K562 (cell line): ENCODE measurements at regions of chr1 and their contacts with region 1.

Region 1: GRCh38 chr1:244864253-244865027 is at the start of gene HNRNPU:
- DNase-seq: peak; percentile 93 to 99 (median 93)
- ATAC-seq: peak; percentile 86
- H3K4me3 ChIP-seq: peak within 1 kb of the TSS; percentile 96
- H3K27ac ChIP-seq: peak within 1 kb of the TSS; percentile 98
- H3K4me1 ChIP-seq: peaks cover 15% of the 10 kb centered on the region in 2 experiments; a peak in 4 of 5 replicates
- H3K27me3 ChIP-seq: no peaks in the 10 kb centered on the region
- CTCF ChIP-seq: peak; percentile 14 to 55 (median 43); a peak in 3 of 6 replicates
- EP300 ChIP-seq: peak; percentile 46
- POLR2A ChIP-seq: peak; percentile 98
- RAD21 ChIP-seq: peak in 1 of 2 experiments; percentile 10; a peak in 2 of 4 replicates
- polyA plus RNA-seq, gene HNRNPU: 159 to 174 TPM

Region 2: GRCh38 chr1:243255791-243256512 is 1608.5 kb before region 1 on chr1 and contains the start of gene SDCCAG8:
- CTCF ChIA-PET with region 1: no interaction called
- POLR2A ChIA-PET with region 1: no interaction called
- in situ Hi-C with region 1: no loop called
- intact Hi-C with region 1: loop called (anchors 5 kb)
- DNase-seq: peak; percentile 91 to 100 (median 94)
- ATAC-seq: peak; percentile 81
- H3K4me3 ChIP-seq: peak within 1 kb of the TSS; percentile 82
- H3K27ac ChIP-seq: peak within 1 kb of the TSS; percentile 97
- H3K4me1 ChIP-seq: peaks cover 9 to 13% of the 10 kb centered on the region in 2 experiments
- H3K27me3 ChIP-seq: no peaks in the 10 kb centered on the region
- CTCF ChIP-seq: no peak
- EP300 ChIP-seq: peak; percentile 46
- POLR2A ChIP-seq: peak; percentile 93
- RAD21 ChIP-seq: 0 out of 4 replicates have a peak, but pooled peaks of 1 of the 2 experiments have one; percentile 17
- polyA plus RNA-seq, gene SDCCAG8: 21.6 to 29.6 TPM

Region 3: GRCh38 chr1:244835276-244836134 is 28.9 kb before region 1 on chr1 and contains the start of gene COX20:
- CTCF ChIA-PET with region 1: interaction called, 4 read pairs
- POLR2A ChIA-PET with region 1: interaction called, 485 read pairs
- in situ Hi-C with region 1: no loop called
- intact Hi-C with region 1: loop called (anchors 1 kb)
- DNase-seq: peak; percentile 94 to 98 (median 95)
- ATAC-seq: peak; percentile 79
- H3K4me3 ChIP-seq: peak within 1 kb of the TSS; percentile 74
- H3K27ac ChIP-seq: peak within 1 kb of the TSS; percentile 98
- H3K4me1 ChIP-seq: peaks cover 14 to 15% of the 10 kb centered on the region in 2 experiments; a peak in 4 of 5 replicates
- H3K27me3 ChIP-seq: no peaks in the 10 kb centered on the region
- CTCF ChIP-seq: no peak
- EP300 ChIP-seq: 0 out of 2 replicates have a peak, but pooled peaks have one; percentile 40
- POLR2A ChIP-seq: peak; percentile 97
- RAD21 ChIP-seq: no peak
- polyA plus RNA-seq, gene COX20: 145 to 171 TPM

Region 4: DNA sequence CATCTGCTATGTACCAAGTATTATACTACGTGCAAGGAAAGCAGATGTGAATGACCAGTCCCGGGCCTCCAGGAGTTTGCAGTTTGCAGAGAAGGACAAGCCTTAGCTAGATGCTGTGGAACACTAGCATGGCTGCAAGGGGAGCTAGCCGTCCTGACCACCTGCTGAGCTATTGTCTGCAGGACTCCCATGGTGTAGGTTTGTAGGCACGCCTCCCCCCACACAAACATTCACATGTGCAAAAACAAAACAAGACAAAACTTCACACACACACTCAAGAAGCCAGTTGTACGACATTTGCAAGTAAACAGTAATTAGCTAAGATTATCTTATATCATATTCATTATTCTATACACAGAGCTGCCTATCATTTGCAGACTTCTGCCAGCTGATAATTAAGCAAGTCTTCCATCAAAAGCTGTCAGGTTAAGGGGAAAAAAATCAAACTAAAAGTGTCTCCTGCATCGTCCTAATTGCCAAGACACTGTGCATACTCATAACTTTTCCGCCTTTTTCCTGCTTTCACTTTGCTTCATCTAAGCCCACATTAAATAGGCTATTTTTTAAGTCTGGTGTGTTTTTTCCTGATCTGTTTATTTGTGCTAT is 10.6 kb after region 1 on chr1:
- CTCF ChIA-PET with region 1: no interaction called
- POLR2A ChIA-PET with region 1: interaction called, 14 read pairs
- in situ Hi-C with region 1: no loop called
- intact Hi-C with region 1: no loop called
- DNase-seq: no peak
- ATAC-seq: peak; percentile 59
- H3K4me3 ChIP-seq: no peak overlapping the region
- H3K27ac ChIP-seq: no peak overlapping the region
- H3K4me1 ChIP-seq: no peaks in the 10 kb centered on the region; a peak in 2 of 5 replicates
- H3K27me3 ChIP-seq: no peaks in the 10 kb centered on the region
- CTCF ChIP-seq: no peak
- EP300 ChIP-seq: no peak
- POLR2A ChIP-seq: no peak
- RAD21 ChIP-seq: no peak

Region 5: GRCh38 chr1:244918421-244919319 is 54.2 kb after region 1 on chr1:
- CTCF ChIA-PET with region 1: no interaction called
- POLR2A ChIA-PET with region 1: interaction called, 3 read pairs
- in situ Hi-C with region 1: no loop called
- intact Hi-C with region 1: loop called (anchors 2 kb)
- DNase-seq: peak; percentile 84 to 86 (median 85)
- ATAC-seq: peak; percentile 92
- H3K4me3 ChIP-seq: peak overlapping the region; percentile 36
- H3K27ac ChIP-seq: peak overlapping the region; percentile 64
- H3K4me1 ChIP-seq: peaks cover 7 to 13% of the 10 kb centered on the region in 2 experiments; a peak in 3 of 5 replicates
- H3K27me3 ChIP-seq: no peaks in the 10 kb centered on the region
- CTCF ChIP-seq: 0 out of 6 replicates have a peak, but pooled peaks of 1 of the 3 experiments have one; percentile 36
- EP300 ChIP-seq: no peak
- POLR2A ChIP-seq: peak; percentile 78
- RAD21 ChIP-seq: peak in 1 of 2 experiments; percentile 17; a peak in 1 of 4 replicates